Aorta (tissue), 5 donors: ENCODE measurements at regions of chr2 and their contacts with region 1.

Region 1: DNA sequence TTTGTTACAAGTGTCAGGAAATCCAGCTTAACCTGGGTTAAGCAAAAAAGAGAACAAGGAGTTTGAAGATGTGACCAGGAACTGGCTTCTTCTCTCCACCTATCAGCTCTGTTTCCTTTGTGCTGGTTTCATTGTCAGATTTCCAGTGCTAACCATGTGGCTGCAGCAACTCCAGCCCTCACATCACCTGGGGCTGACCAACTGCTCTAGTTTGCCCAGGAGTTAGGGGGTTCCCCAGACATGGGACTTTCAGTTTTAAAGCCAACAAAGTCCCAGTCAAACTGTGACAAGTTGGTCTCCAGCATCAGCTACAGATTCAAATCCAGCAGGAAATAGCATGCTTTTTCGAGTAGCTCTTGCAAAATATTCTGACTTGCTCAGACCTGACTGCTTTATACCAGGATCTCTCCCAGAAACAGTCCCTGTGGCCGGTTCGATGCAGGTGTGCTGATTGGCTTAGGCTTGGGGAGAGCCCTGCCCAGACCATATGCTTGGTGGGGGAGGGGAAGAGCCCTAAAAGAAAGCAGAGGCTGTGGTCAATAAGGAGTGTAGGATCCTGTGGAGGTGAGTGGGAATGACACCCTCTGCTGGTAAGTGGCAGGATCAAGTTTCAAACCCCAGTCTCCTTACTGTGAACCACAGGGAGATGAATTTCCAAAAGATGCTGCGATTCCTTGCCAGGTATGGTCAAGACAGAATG is 49.5 kb downstream of the KCNE4 start:
- DNase-seq: no peak
- ATAC-seq: peak; percentile 45
- H3K4me3 ChIP-seq: no peak overlapping the region
- H3K27ac ChIP-seq: no peak overlapping the region
- H3K4me1 ChIP-seq: no peaks in the 10 kb centered on the region
- H3K27me3 ChIP-seq: no peaks in the 10 kb centered on the region

Region 2: DNA sequence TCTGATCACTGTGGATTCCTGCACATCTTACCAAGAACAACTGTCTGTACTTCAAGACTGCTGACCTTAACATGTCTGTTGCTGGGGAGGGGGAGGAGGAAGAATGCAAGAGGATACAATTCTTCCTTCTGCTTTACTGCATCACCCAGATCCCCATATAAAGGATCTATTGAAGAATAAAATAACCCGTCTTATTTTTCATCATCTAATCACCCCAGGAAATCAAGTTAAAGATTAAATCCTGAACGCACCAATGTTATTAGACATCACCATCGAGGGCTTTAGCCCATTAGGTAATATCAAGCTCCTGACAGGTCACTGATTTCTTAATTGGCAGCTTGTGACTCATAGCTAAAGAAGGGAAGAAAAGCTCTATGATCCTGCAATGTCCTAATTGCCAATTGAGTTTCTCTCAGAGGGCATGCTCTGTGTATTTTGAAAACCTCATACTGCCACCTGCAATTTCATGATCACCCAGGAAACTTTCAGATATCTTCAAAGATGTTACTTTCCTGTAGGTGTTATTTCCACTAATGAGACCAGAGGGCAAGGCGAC is 124.9 kb before region 1 on chr2:
- intact Hi-C with region 1: loop called (anchors 5 kb)
- DNase-seq: no peak
- ATAC-seq: no peak
- H3K4me3 ChIP-seq: no peak overlapping the region
- H3K27ac ChIP-seq: no peak overlapping the region
- H3K4me1 ChIP-seq: peaks cover 0 to 2% of the 10 kb centered on the region in 2 donors
- H3K27me3 ChIP-seq: no peaks in the 10 kb centered on the region

Region 3: GRCh38 chr2:222982010-222982908 is 119.2 kb before region 1 on chr2:
- intact Hi-C with region 1: loop called in 1 of 2 experiments (anchors 5 kb)
- DNase-seq: peak; percentile 70 to 72
- ATAC-seq: peak; percentile 80
- H3K4me3 ChIP-seq: no peak overlapping the region
- H3K27ac ChIP-seq: no peak overlapping the region
- H3K4me1 ChIP-seq: peaks cover 4 to 10% of the 10 kb centered on the region in 2 donors
- H3K27me3 ChIP-seq: no peaks in the 10 kb centered on the region